T-cell (primary cell): ENCODE measurements at regions of chr1 and their contacts with region 1.

Region 1: GRCh38 chr1:33633019-33633801 is 160.8 kb downstream of the ZSCAN20 start:
- DNase-seq: peak; percentile 52 to 87 (median 76)
- ATAC-seq: peak; percentile 82 to 92 (median 88)
- H3K4me3 ChIP-seq: no peak overlapping the region
- H3K4me3 Mint-ChIP-seq: peak overlapping the region in 1 of 3 donors; percentile 62
- H3K27ac ChIP-seq: no peak overlapping the region
- H3K27ac Mint-ChIP-seq: no peak overlapping the region
- H3K4me1 ChIP-seq: peaks cover 0 to 6% of the 10 kb centered on the region in 2 experiments
- H3K4me1 Mint-ChIP-seq: peaks cover 3 to 12% (median 4%) of the 10 kb centered on the region in 3 donors
- H3K27me3 ChIP-seq: peaks cover 0 to 32% of the 10 kb centered on the region in 2 experiments
- H3K27me3 Mint-ChIP-seq: peaks cover 31 to 43% of the 10 kb centered on the region in 2 donors

Region 2: DNA sequence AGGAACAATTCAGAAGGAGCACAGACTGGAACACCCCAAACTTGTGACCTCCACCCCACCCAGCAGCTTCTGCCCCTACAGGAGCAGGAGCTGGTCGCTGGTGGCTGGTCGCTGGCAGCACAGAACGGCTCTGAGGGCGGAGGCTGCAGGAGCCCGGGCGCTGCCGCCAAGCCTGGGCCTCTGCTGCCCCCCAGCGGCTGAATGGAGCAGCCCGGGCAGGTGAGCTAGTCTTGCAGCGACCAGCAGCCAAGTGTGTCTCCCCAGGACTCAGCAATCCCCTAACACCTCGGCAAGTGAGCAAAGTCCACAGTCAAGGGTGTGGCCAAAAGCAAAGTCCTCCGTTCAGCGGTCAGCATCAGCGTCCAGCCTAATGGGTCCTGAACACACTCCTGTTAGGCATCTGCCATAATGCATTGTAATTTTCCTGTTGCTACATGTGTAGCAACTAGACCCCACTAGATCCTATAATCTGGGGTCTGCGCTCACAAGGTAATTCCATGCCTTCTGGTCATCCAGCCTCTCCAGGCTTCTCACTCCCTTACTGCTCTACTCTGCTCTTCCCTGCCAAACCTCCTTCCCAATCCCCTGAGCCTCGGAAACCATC is 1109.6 kb after region 1 on chr1:
- CTCF ChIA-PET with region 1: interaction called, 3 to 10 read pairs
- POLR2A ChIA-PET with region 1: no interaction called
- DNase-seq: peak; percentile 22 to 81 (median 63)
- ATAC-seq: peak; percentile 82 to 86 (median 86)
- H3K4me3 ChIP-seq: no peak overlapping the region
- H3K4me3 Mint-ChIP-seq: no peak overlapping the region
- H3K27ac ChIP-seq: no peak overlapping the region
- H3K27ac Mint-ChIP-seq: no peak overlapping the region
- H3K4me1 ChIP-seq: peaks cover 0 to 6% of the 10 kb centered on the region in 2 experiments
- H3K4me1 Mint-ChIP-seq: peaks cover 3 to 8% (median 3%) of the 10 kb centered on the region in 3 donors
- H3K27me3 ChIP-seq: peaks cover 0 to 38% of the 10 kb centered on the region in 2 experiments
- H3K27me3 Mint-ChIP-seq: peaks cover 6 to 8% of the 10 kb centered on the region in 2 donors